ENCODE measurements at regions of chr9 and their contacts with region 1.

Region 1: DNA sequence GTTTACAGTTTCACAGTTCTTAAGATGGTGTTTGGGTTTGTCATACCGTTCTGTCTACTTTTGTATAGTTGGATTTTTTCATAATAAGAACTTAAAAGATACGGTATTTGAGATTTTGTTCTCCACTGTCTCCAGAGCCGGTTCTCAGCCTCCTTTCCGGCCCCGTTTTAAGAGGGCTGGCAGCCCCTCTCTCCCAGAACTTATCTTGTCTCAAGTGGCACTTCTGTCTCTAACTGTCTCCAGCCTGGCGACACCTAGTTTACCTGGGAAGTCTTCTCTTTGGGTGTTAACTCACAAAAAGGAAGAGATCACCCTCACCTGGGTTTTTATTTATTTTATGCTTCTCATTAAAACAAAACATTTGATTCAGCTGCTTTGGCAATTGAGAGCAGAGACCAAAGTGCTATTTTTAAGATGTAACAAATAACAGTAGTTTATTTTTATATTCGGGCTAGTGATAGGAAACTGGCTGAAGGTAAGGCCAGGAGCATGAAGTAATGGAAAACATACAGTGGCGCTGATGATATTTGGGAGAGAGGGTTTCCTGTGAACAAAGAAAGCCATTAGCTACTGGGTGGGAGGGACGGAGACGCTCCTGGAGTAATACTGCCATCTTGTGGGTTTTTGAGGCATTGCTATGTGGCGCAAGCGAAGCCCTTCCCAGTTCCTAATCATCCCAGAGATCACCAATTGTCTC is 48.3 kb downstream of the ACER2 start:
- DNase-seq: peak; percentile 66
- ATAC-seq: peak; percentile 95
- H3K4me3 ChIP-seq: peak overlapping the region in 2 of 3 experiments; percentile 30; a peak in 2 of 6 replicates
- H3K27ac ChIP-seq: no peak overlapping the region
- H3K4me1 ChIP-seq: peaks cover 5% of the 10 kb centered on the region; the same call in 1 of the 2 replicates
- H3K27me3 ChIP-seq: no peaks in the 10 kb centered on the region
- CTCF ChIP-seq: peak; percentile 92
- EP300 ChIP-seq: no peak
- POLR2A ChIP-seq: no peak
- RAD21 ChIP-seq: peak; percentile 91

Region 2: DNA sequence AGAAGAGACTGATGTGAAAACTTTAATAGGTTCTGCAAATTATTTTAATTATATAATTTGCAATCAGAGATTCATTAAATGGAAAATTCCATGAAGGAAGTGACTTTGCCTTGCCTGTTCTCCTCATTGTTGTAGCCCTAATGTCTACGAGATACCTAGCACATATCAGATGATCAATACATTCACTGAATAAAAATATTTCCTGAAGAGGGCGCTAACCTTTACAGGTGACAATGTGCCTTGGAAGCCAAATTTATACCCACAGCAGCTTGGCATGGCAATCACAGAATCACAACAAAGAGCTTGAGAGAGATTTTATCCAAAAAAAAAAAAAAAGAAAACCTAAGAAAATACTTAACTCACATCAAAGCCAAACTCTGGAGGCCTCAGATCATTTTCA is 371.8 kb before region 1 on chr9:
- CTCF ChIA-PET with region 1: no interaction called
- POLR2A ChIA-PET with region 1: no interaction called
- in situ Hi-C with region 1: no loop called
- intact Hi-C with region 1: loop called (anchors 5 kb)
- DNase-seq: peak; percentile 35
- ATAC-seq: peak; percentile 65
- H3K4me3 ChIP-seq: no peak overlapping the region
- H3K27ac ChIP-seq: no peak overlapping the region
- H3K4me1 ChIP-seq: peaks cover 13% of the 10 kb centered on the region
- H3K27me3 ChIP-seq: no peaks in the 10 kb centered on the region
- CTCF ChIP-seq: peak; percentile 51
- EP300 ChIP-seq: no peak
- POLR2A ChIP-seq: no peak
- RAD21 ChIP-seq: no peak

Region 3: GRCh38 chr9:19127881-19128500 is 329.2 kb before region 1 on chr9:
- CTCF ChIA-PET with region 1: no interaction called
- POLR2A ChIA-PET with region 1: no interaction called
- in situ Hi-C with region 1: no loop called
- intact Hi-C with region 1: no loop called
- DNase-seq: no peak
- ATAC-seq: peak; percentile 7
- H3K4me3 ChIP-seq: peak overlapping the region; percentile 73 to 89 (median 81); a peak in 4 of 6 replicates
- H3K27ac ChIP-seq: peak overlapping the region; percentile 92
- H3K4me1 ChIP-seq: peaks cover 81% of the 10 kb centered on the region
- H3K27me3 ChIP-seq: peaks cover 0 to 5% of the 10 kb centered on the region in 2 experiments; a peak in 1 of 5 replicates
- CTCF ChIP-seq: no peak
- EP300 ChIP-seq: no peak
- POLR2A ChIP-seq: no peak
- RAD21 ChIP-seq: no peak

Region 4: DNA sequence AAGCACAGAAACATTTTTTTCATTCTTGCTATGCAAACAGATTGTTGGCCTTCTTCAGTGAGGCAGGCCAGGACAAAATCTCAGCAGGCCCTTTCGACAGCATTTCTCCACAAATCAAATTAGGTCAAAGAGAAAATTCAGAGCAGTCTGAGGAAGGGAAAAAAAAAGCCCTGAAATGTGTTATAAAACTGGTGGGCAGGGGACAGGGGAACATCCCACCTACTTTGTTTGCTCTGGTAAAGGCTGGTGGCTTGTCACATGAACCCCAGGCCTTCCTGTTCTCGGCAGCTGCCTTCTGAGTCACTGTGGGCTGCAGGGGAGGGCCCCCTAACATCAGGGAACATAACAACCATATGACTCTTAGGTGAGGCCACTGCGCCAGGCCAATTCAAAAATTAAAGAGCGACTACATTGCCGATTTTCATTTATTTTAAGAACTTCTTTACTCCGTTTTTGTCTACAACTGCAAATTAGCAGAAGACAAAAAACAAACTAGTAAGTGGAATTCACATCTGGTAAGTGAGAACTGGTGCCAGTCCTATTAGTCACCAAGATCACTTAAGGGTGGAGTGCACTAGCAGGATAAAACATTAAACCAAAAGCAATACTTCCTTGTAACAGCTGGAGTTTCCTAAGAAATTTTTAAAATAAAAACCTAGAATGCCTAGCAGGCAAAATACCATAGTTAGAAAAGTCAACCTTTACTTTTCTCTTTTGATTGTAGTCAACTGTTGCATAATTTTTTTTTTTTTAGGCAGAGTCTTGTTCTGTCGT is 272.8 kb before region 1 on chr9:
- CTCF ChIA-PET with region 1: no interaction called
- POLR2A ChIA-PET with region 1: no interaction called
- in situ Hi-C with region 1: no loop called
- intact Hi-C with region 1: loop called (anchors 10 kb)
- DNase-seq: peak; percentile 76
- ATAC-seq: peak; percentile 98
- H3K4me3 ChIP-seq: peak overlapping the region in 1 of 3 experiments; percentile 39; a peak in 2 of 6 replicates
- H3K27ac ChIP-seq: peak overlapping the region; percentile 61
- H3K4me1 ChIP-seq: peaks cover 30% of the 10 kb centered on the region
- H3K27me3 ChIP-seq: no peaks in the 10 kb centered on the region
- CTCF ChIP-seq: peak; percentile 23
- EP300 ChIP-seq: peak in 1 of 2 experiments; percentile 37; a peak in 1 of 4 replicates
- POLR2A ChIP-seq: no peak
- RAD21 ChIP-seq: no peak

Region 5: GRCh38 chr9:19342947-19343346 is 114.2 kb before region 1 on chr9:
- CTCF ChIA-PET with region 1: no interaction called
- POLR2A ChIA-PET with region 1: no interaction called
- in situ Hi-C with region 1: no loop called
- intact Hi-C with region 1: no loop called
- DNase-seq: no peak
- ATAC-seq: no peak
- H3K4me3 ChIP-seq: no peak overlapping the region
- H3K27ac ChIP-seq: no peak overlapping the region
- H3K4me1 ChIP-seq: no peaks in the 10 kb centered on the region
- H3K27me3 ChIP-seq: no peaks in the 10 kb centered on the region
- CTCF ChIP-seq: no peak
- EP300 ChIP-seq: no peak
- POLR2A ChIP-seq: no peak
- RAD21 ChIP-seq: no peak

Region 6: GRCh38 chr9:19379697-19380046 is 77.5 kb before region 1 on chr9:
- CTCF ChIA-PET with region 1: no interaction called
- POLR2A ChIA-PET with region 1: no interaction called
- in situ Hi-C with region 1: no loop called
- intact Hi-C with region 1: loop called (anchors 1 kb)
- DNase-seq: no peak
- ATAC-seq: peak; percentile 51
- H3K4me3 ChIP-seq: peak overlapping the region; percentile 73 to 98 (median 93)
- H3K27ac ChIP-seq: peak overlapping the region; percentile 91
- H3K4me1 ChIP-seq: peaks cover 31% of the 10 kb centered on the region
- H3K27me3 ChIP-seq: no peaks in the 10 kb centered on the region; a peak in 1 of 5 replicates
- CTCF ChIP-seq: no peak
- EP300 ChIP-seq: no peak
- POLR2A ChIP-seq: no peak
- RAD21 ChIP-seq: no peak

Measured in HepG2 (cell line).